ENCODE measurements at regions of chr12 and their contacts with region 1.

Region 1: GRCh38 chr12:13211859-13212664 is 15.5 kb downstream of the EMP1 start:
- DNase-seq: peak; percentile 81
- H3K4me3 Mint-ChIP-seq: peak overlapping the region; percentile 53
- H3K27ac Mint-ChIP-seq: peak overlapping the region; percentile 93
- H3K4me1 Mint-ChIP-seq: peaks cover 54% of the 10 kb centered on the region
- H3K27me3 Mint-ChIP-seq: no peaks in the 10 kb centered on the region

Region 2: DNA sequence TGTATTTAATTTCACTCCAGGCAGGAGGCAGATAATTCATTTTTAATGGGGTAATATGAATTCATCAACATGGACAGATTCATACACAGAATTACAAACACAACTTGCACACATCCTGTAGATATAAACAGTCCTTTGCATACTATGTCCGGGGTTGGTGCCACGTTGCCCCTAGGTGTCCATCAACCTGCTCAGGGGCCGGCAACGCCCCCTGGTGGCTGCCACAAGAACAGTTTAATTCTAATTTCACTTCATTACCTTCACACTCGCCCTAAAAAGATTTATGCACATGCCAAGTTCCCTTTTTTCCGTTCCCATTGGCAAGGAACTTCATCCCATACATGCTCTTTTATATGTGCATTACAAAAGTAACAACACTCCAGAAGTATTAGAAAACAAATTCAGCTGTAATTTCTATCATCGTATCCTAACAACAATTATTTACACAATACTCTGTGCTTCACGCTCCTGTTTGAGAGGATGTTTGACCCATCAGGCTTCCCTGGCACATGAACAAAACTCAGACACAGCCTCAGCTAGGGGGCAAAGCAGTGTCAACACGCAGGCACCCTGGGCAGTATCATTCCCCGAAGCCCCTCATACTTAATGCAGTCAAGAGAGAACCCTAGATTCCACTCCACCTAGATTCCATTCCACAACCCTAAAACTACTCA is 877.6 kb before region 1 on chr12:
- CTCF ChIA-PET with region 1: no interaction called
- POLR2A ChIA-PET with region 1: no interaction called
- intact Hi-C with region 1: no loop called
- DNase-seq: peak; percentile 77
- H3K4me3 Mint-ChIP-seq: no peak overlapping the region
- H3K27ac Mint-ChIP-seq: no peak overlapping the region
- H3K4me1 Mint-ChIP-seq: peaks cover 25% of the 10 kb centered on the region
- H3K27me3 Mint-ChIP-seq: no peaks in the 10 kb centered on the region

Region 3: DNA sequence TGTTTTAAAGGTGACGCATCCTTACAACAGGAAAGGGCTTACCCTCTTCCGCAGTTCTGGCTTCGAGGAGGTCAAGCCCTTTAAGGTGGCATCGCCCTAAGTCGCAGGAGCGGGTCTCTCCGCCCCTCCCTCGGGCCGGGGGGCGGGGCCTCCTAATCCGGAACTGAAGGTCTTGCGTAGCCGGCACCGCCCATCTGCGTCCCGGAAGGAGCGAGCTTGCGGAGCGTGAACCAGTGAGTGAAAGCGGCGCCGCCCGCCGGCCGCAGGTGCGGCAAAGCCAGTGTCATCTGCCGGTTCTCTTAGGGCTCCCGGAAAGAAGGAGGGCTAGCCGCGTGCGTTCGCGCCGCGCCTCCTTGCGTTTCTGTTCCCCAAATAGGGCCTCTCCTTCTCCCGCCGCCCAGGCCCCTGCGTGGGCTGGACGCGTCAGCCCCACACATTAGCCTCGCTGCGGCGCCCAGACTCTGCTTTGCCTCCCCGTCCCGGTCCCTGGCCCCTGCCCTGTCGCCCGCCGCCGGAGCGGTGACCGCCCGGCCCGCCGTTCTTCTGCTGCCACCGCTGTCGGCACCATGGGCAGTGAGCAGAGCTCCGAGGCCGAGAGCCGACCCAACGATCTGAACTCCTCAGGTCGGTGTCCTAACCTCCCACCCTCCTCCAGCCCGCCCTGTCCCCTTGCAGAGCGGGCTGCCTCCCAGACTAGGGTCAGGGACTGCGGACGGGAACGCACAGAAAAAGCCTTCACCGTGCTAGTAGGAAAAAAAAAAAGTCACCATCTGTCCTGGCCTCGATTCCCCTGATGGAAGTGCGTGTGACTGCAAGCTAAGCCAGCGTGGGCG is 855.0 kb before region 1 on chr12 and contains the start of gene BORCS5:
- CTCF ChIA-PET with region 1: no interaction called
- POLR2A ChIA-PET with region 1: no interaction called
- intact Hi-C with region 1: loop called (anchors 10 kb)
- DNase-seq: peak; percentile 99
- H3K4me3 Mint-ChIP-seq: peak within 1 kb of the TSS; percentile 98
- H3K27ac Mint-ChIP-seq: peak within 1 kb of the TSS; percentile 99
- H3K4me1 Mint-ChIP-seq: peaks cover 43% of the 10 kb centered on the region
- H3K27me3 Mint-ChIP-seq: no peaks in the 10 kb centered on the region
- total RNA-seq, gene BORCS5: 43.7 to 47.8 TPM

Region 4: DNA sequence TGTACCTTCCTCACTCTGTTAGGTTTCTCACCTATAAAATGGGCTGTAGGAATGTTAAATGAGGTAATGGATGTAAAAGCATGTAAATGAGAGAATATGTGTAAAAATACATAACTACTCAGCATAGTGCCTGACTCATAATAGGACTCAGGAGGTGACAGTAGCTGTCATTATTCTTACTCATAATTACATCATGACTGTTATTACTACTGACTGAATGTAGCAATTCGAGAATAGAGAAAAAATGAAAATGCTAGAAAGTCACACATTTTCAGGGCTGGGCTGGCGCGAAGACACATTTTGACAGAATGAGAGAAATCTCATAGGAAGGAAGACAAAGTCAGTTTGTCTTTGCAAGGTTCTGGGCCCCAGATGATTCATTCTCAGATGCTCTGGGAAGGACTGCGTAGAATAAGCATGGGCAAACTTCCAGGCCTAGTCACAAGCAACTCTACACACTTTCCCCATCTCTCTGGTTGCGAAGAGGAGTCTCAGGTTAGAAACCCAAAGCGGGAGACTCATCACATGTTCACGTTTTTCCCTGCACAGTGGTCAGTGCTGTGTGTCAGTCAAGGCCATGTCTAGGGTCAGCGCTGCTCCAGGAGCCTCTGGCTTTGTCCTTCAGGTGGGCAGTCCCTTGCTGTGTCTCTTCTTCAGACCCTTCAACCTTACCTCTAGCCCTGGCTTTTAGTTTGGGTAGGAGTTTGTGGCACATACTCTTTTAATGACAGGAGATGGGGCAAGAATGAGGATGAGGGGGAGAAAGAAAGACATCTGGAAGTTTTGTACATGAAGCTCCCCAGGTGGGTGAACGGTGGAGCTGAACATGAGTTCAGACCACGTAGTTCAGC is 312.3 kb before region 1 on chr12:
- CTCF ChIA-PET with region 1: no interaction called
- POLR2A ChIA-PET with region 1: no interaction called
- intact Hi-C with region 1: loop called (anchors 1 kb)
- DNase-seq: peak; percentile 86
- H3K4me3 Mint-ChIP-seq: no peak overlapping the region
- H3K27ac Mint-ChIP-seq: peak overlapping the region; percentile 77
- H3K4me1 Mint-ChIP-seq: peaks cover 19% of the 10 kb centered on the region
- H3K27me3 Mint-ChIP-seq: peaks cover 16% of the 10 kb centered on the region

Region 5: GRCh38 chr12:13044002-13044905 is 167.8 kb before region 1 on chr12 and contains the start of gene FAM234B:
- CTCF ChIA-PET with region 1: interaction called, 32 read pairs
- POLR2A ChIA-PET with region 1: interaction called, 3 read pairs
- intact Hi-C with region 1: loop called (anchors 1 kb)
- DNase-seq: peak; percentile 78
- H3K4me3 Mint-ChIP-seq: peak within 1 kb of the TSS; percentile 80
- H3K27ac Mint-ChIP-seq: no peak within 1 kb of the TSS
- H3K4me1 Mint-ChIP-seq: peaks cover 25% of the 10 kb centered on the region
- H3K27me3 Mint-ChIP-seq: peaks cover 3% of the 10 kb centered on the region
- total RNA-seq, gene FAM234B: 6.8 TPM

Region 6: GRCh38 chr12:13179211-13180074 is 32.6 kb before region 1 on chr12:
- CTCF ChIA-PET with region 1: interaction called, 16 read pairs
- POLR2A ChIA-PET with region 1: interaction called, 4 read pairs
- intact Hi-C with region 1: no loop called
- DNase-seq: peak; percentile 83
- H3K4me3 Mint-ChIP-seq: peak overlapping the region; percentile 30
- H3K27ac Mint-ChIP-seq: peak overlapping the region; percentile 16
- H3K4me1 Mint-ChIP-seq: peaks cover 16% of the 10 kb centered on the region
- H3K27me3 Mint-ChIP-seq: peaks cover 13% of the 10 kb centered on the region

Region 7: DNA sequence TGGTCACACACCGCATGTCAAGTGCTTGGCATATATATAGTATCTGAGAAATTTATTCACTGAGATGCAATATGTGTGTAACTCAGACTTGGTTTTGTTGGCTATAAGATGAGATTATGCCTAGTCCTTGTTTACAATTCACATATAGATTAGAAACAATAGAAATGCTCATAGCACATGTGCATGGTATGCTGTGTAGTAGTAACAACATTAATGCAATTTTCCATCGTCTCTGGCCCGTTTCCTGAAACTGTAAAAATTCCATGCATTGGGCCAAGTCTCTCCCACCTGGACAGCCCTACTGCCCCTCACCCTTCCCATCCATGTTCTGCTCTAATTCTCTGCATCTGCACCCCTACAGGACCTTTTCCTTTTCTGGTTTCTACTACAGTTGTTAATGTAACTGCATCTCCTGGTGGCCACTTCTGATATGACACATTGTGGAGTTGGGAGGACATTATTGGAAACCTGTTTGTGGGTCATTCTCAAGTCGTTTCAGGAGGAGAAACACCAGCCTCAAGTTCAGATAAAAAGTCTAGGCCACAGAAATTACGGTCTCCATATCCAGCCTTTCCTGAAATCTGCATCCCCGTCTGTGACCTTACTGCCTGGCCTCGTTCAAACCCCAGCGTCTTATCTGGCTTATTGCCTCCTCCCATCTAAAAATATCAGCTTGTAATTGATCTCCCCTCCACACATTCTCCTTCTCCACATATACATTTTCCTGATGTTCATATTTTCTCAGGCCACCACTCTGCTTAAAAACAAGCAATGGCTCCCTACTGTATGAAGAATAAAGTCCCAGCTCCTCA is 22.0 kb after region 1 on chr12:
- CTCF ChIA-PET with region 1: interaction called, 10 read pairs
- POLR2A ChIA-PET with region 1: no interaction called
- intact Hi-C with region 1: no loop called
- DNase-seq: peak; percentile 25
- H3K4me3 Mint-ChIP-seq: no peak overlapping the region
- H3K27ac Mint-ChIP-seq: no peak overlapping the region
- H3K4me1 Mint-ChIP-seq: no peaks in the 10 kb centered on the region
- H3K27me3 Mint-ChIP-seq: peaks cover 6% of the 10 kb centered on the region

Measured in activated CD4-positive, alpha-beta memory T cell treated with anti-CD3 and anti-CD28 coated beads for 36 hours (primary cell).